ENCODE measurements at regions of chr12 and their contacts with region 1.

Region 1: DNA sequence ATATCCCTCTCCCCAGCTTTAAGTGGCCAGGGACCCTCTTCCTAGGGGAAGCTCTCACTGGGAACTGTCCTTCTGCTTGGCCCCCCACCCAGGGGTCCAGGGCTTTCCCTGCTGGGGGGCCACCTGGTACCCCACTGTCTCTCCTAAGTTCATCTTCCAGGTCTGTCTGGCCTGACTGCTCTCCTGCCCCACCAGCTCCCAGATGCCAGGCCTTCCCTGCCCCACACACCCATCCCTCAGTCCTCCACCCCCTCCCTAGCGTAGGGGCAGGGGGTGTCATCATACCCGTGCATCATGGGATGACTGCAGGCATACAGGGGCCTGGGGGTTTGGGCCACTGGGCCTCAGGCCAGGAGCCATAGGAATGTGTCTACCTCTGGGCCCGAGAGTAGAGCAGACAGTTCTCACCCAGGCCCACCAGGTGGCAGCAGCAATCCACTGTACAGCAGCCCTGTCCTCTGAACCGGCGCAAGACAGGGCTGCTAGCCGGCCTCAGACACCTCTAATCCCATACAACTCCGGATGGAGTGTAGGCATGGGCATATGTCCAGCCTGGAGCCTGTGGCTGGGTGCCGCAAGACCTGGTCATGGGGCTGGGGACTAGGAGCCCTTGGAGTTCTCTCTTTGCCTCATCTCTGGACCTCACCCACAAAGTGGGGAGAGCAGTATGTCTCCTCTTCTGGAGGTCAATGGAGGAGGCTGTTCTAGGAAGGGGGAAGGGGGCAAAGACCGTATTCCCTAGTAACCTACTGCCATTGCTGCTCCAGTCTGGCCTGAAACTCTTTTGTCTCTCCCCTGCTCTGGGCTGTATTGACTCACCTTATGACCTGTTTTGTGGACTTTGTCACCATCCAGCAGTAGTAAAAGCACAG is 10.0 kb upstream of the SMARCD1 start:
- DNase-seq: peak; percentile 87
- ATAC-seq: peak; percentile 95
- H3K4me3 Mint-ChIP-seq: no peak overlapping the region
- H3K27ac Mint-ChIP-seq: peak overlapping the region; percentile 60
- H3K4me1 Mint-ChIP-seq: peaks cover 12% of the 10 kb centered on the region
- H3K27me3 Mint-ChIP-seq: no peaks in the 10 kb centered on the region

Region 2: GRCh38 chr12:50043854-50044253 is 31.3 kb before region 1 on chr12:
- CTCF ChIA-PET with region 1: interaction called, 180 read pairs
- POLR2A ChIA-PET with region 1: no interaction called
- DNase-seq: no peak
- ATAC-seq: no peak
- H3K4me3 Mint-ChIP-seq: no peak overlapping the region
- H3K27ac Mint-ChIP-seq: no peak overlapping the region
- H3K4me1 Mint-ChIP-seq: peaks cover 4% of the 10 kb centered on the region
- H3K27me3 Mint-ChIP-seq: peaks cover 8% of the 10 kb centered on the region

Region 3: GRCh38 chr12:50050410-50051098 is 24.6 kb before region 1 on chr12:
- CTCF ChIA-PET with region 1: interaction called, 17 read pairs
- POLR2A ChIA-PET with region 1: no interaction called
- DNase-seq: no peak
- ATAC-seq: no peak
- H3K4me3 Mint-ChIP-seq: no peak overlapping the region
- H3K27ac Mint-ChIP-seq: no peak overlapping the region
- H3K4me1 Mint-ChIP-seq: peaks cover 4% of the 10 kb centered on the region
- H3K27me3 Mint-ChIP-seq: peaks cover 47% of the 10 kb centered on the region

Region 4: GRCh38 chr12:50174971-50175715 is 100.0 kb after region 1 on chr12:
- CTCF ChIA-PET with region 1: interaction called, 11 read pairs
- POLR2A ChIA-PET with region 1: no interaction called
- DNase-seq: peak; percentile 39
- ATAC-seq: no peak
- H3K4me3 Mint-ChIP-seq: no peak overlapping the region
- H3K27ac Mint-ChIP-seq: no peak overlapping the region
- H3K4me1 Mint-ChIP-seq: peaks cover 2% of the 10 kb centered on the region
- H3K27me3 Mint-ChIP-seq: no peaks in the 10 kb centered on the region

Region 5: DNA sequence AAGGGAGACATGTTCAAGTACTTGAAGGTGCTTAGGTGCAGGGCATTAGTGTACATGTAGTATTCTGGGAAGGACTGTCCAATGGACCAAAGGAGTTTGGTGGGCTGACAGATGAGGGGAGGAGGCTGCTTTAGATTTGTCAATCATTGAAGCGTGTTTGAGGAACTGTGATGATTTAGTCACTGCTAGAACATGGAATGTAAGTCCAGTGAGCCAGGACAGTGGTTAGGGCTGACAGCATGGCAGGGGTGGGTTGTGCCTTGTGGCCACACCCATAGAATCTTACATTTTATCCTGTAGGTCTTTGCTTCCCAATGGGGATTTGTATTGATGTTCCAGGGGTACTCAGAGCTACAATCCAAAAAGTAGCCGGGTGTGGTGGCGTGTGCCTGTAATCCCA is 454.2 kb after region 1 on chr12:
- CTCF ChIA-PET with region 1: no interaction called
- POLR2A ChIA-PET with region 1: no interaction called
- DNase-seq: no peak
- ATAC-seq: no peak
- H3K4me3 Mint-ChIP-seq: no peak overlapping the region
- H3K27ac Mint-ChIP-seq: peak overlapping the region; percentile 27
- H3K4me1 Mint-ChIP-seq: peaks cover 33% of the 10 kb centered on the region
- H3K27me3 Mint-ChIP-seq: no peaks in the 10 kb centered on the region

Measured in activated CD8-positive, alpha-beta T cell treated with anti-CD3 and anti-CD28 coated beads, Interleukin-2, amount 10 ng/mL, durations not matched to agents 7 days and 5 days (primary cell).